GM12878 (cell line): ENCODE measurements at regions of chr15 and their contacts with region 1.

Region 1: DNA sequence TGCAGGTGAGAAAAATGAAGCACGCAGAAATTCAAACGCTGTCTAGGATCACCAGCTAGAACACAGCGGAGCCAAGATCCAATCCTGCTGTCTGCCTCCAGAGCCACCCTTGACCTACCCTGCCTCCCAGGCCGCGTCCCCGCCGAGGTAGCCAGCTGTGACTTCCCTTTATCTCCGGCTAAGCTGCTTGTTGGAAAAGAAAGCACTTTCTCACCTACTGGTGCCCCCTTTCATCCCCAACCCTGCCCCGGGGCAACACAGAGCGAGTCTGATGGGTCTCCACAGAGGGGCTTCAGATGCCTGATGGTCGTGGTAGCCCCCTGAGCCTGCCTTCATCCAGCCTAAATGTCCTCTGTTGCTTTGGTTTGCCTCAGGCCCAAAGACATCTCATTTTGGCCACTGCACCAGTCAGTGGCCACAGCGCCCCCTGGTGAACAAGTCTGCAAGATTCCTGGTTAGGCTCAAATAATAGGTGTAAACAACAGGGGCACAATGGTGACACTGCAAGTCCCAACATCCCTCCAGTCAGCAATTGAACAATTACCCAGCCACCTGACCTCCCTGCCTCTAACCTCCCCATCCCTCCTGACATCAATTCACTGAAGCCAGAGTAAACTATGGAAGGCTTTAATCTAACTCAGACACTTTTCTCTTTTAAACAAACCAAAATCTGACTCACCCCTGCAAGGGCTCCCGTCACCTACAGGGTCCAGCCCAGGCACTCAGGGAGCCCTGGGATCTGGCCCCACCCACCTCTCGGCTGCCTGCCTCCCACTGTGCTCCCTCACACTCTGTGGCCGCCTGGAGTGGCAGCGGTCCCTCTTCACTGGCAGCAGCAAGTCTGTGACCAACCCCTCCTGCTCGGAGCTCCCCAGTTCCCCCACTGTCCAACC is 27.3 kb upstream of the BCL2L10 start:
- DNase-seq: peak; percentile 39
- ATAC-seq: peak; percentile 83
- H3K4me3 ChIP-seq: no peak overlapping the region
- H3K27ac ChIP-seq: peak overlapping the region; percentile 66
- H3K4me1 ChIP-seq: peaks cover 35% of the 10 kb centered on the region
- H3K27me3 ChIP-seq: no peaks in the 10 kb centered on the region
- CTCF ChIP-seq: peak; percentile 78 to 91 (median 86)
- EP300 ChIP-seq: no peak
- POLR2A ChIP-seq: no peak
- RAD21 ChIP-seq: peak; percentile 98

Region 2: GRCh38 chr15:51971375-51972133 is 168.3 kb before region 1 on chr15 and contains the start of gene LEO1:
- CTCF ChIA-PET with region 1: interaction called, 10 read pairs
- POLR2A ChIA-PET with region 1: interaction called, 5 read pairs
- RAD21 ChIA-PET with region 1: interaction called, 3 read pairs
- SMC1A ChIA-PET with region 1: interaction called, 20 read pairs
- in situ Hi-C with region 1: loop called (anchors 5 kb)
- intact Hi-C with region 1: no loop called
- DNase-seq: peak; percentile 88
- ATAC-seq: peak; percentile 91
- H3K4me3 ChIP-seq: peak within 1 kb of the TSS; percentile 82
- H3K27ac ChIP-seq: peak within 1 kb of the TSS; percentile 83
- H3K4me1 ChIP-seq: no peaks in the 10 kb centered on the region
- H3K27me3 ChIP-seq: no peaks in the 10 kb centered on the region
- CTCF ChIP-seq: peak; percentile 18 to 42 (median 39); a peak in 4 of 6 replicates
- EP300 ChIP-seq: no peak
- POLR2A ChIP-seq: peak; percentile 94
- RAD21 ChIP-seq: 0 out of 2 replicates have a peak, but pooled peaks have one; percentile 0
- polyA plus RNA-seq, gene LEO1: 29.5 to 35.2 TPM

Region 3: GRCh38 chr15:52005748-52006701 is 133.8 kb before region 1 on chr15:
- CTCF ChIA-PET with region 1: interaction called, 5 read pairs
- POLR2A ChIA-PET with region 1: interaction called, 12 read pairs
- RAD21 ChIA-PET with region 1: interaction called, 3 read pairs
- SMC1A ChIA-PET with region 1: interaction called, 20 read pairs
- in situ Hi-C with region 1: no loop called
- intact Hi-C with region 1: no loop called
- DNase-seq: peak; percentile 97
- ATAC-seq: peak; percentile 81
- H3K4me3 ChIP-seq: no peak overlapping the region; the same call in 1 of the 2 replicates
- H3K27ac ChIP-seq: peak overlapping the region; percentile 99
- H3K4me1 ChIP-seq: peaks cover 56% of the 10 kb centered on the region
- H3K27me3 ChIP-seq: no peaks in the 10 kb centered on the region
- CTCF ChIP-seq: no peak
- EP300 ChIP-seq: peak; percentile 50 to 73; a peak in 2 of 4 replicates
- POLR2A ChIP-seq: no peak
- RAD21 ChIP-seq: no peak

Region 4: GRCh38 chr15:52050416-52050815 is 89.4 kb before region 1 on chr15:
- CTCF ChIA-PET with region 1: interaction called, 11 read pairs
- POLR2A ChIA-PET with region 1: no interaction called
- RAD21 ChIA-PET with region 1: no interaction called
- SMC1A ChIA-PET with region 1: no interaction called
- in situ Hi-C with region 1: no loop called
- intact Hi-C with region 1: no loop called
- DNase-seq: no peak
- ATAC-seq: no peak
- H3K4me3 ChIP-seq: no peak overlapping the region
- H3K27ac ChIP-seq: no peak overlapping the region
- H3K4me1 ChIP-seq: no peaks in the 10 kb centered on the region
- H3K27me3 ChIP-seq: no peaks in the 10 kb centered on the region
- CTCF ChIP-seq: no peak
- EP300 ChIP-seq: no peak
- POLR2A ChIP-seq: no peak
- RAD21 ChIP-seq: no peak

Region 5: DNA sequence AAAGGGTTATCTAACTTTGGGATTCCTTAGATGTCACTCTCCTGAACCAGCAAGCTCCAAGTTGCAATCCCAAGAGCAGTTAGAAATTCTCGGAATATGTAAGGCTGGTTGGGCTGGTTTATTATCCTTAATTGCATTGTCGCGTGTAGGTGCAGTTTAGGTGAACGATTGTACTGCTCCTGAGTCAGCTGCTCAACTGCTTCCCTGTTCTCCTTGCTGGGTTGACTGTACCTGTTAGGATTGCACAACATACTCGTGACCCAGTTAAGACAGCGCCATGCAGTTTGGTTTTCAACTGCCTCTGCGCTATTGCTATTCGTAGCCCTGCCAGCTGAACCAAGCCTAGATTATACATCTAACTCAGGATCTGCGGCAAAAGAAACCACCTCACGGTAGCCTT is 68.3 kb before region 1 on chr15:
- CTCF ChIA-PET with region 1: interaction called, 32 read pairs
- POLR2A ChIA-PET with region 1: interaction called, 3 read pairs
- RAD21 ChIA-PET with region 1: interaction called, 46 read pairs
- SMC1A ChIA-PET with region 1: interaction called, 159 read pairs
- in situ Hi-C with region 1: no loop called
- intact Hi-C with region 1: no loop called
- DNase-seq: no peak
- ATAC-seq: no peak
- H3K4me3 ChIP-seq: no peak overlapping the region
- H3K27ac ChIP-seq: no peak overlapping the region
- H3K4me1 ChIP-seq: peaks cover 6% of the 10 kb centered on the region
- H3K27me3 ChIP-seq: no peaks in the 10 kb centered on the region
- CTCF ChIP-seq: no peak
- EP300 ChIP-seq: no peak
- POLR2A ChIP-seq: no peak
- RAD21 ChIP-seq: no peak

Region 6: GRCh38 chr15:52112203-52112750 is 27.6 kb before region 1 on chr15:
- CTCF ChIA-PET with region 1: interaction called, 115 read pairs
- POLR2A ChIA-PET with region 1: interaction called, 4 read pairs
- RAD21 ChIA-PET with region 1: interaction called, 139 read pairs
- SMC1A ChIA-PET with region 1: interaction called, 163 read pairs
- in situ Hi-C with region 1: no loop called
- intact Hi-C with region 1: no loop called
- DNase-seq: no peak
- ATAC-seq: peak; percentile 15
- H3K4me3 ChIP-seq: peak overlapping the region; percentile 72; the same call in 1 of the 2 replicates
- H3K27ac ChIP-seq: peak overlapping the region; percentile 94
- H3K4me1 ChIP-seq: peaks cover 42% of the 10 kb centered on the region
- H3K27me3 ChIP-seq: no peaks in the 10 kb centered on the region
- CTCF ChIP-seq: peak in 1 of 3 experiments; percentile 15; a peak in 1 of 6 replicates
- EP300 ChIP-seq: no peak
- POLR2A ChIP-seq: peak; percentile 79
- RAD21 ChIP-seq: no peak